ENCODE measurements at regions of chr2 and their contacts with region 1.

Region 1: DNA sequence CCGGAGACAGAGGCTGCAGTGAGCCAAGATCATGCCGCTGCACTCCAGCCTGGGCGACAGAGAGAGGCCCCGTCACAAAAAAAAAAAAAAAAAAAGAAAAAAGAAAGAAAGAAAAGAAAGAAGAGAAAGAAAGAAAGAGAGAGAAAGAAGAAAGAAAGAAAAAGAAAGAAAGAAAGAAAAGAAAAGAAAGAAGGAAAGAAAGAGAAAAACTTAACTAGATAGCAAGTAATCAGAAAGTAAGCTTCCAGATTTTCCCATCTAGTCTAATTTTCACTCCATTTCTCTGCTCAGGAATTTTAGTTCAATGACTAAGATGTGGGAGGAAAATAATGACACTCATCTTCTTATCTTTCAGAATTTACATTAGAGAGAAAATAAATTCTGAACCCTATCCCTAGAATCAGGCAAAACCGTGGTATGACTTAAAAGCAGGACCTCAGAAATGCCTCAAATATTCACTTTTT is 2.4 kb downstream of the GFPT1 start:
- DNase-seq: no peak
- H3K4me3 Mint-ChIP-seq: peak overlapping the region; percentile 94
- H3K27ac Mint-ChIP-seq: peak overlapping the region; percentile 88
- H3K4me1 Mint-ChIP-seq: peaks cover 48% of the 10 kb centered on the region
- H3K27me3 Mint-ChIP-seq: no peaks in the 10 kb centered on the region
- CTCF ChIP-seq: no peak

Region 2: DNA sequence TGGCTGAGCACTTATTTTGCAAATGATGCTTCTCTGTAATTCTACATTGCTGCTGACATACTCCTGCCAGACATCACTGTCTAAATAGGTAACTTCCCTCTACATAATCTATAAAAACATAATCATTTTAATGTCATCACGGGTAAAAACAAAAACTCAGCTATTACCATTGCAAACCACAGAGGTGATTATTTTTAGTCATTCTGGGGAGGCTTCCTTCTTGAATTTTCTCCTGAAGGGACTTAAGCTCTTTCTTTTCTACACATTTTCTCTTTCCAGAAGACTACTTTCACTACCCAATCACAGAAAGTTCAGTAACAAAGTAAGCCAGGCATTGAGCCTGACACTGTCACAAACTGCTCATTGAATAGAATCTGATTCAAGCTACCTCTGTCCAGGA is 93.0 kb after region 1 on chr2:
- CTCF ChIA-PET with region 1: interaction called, 10 read pairs
- intact Hi-C with region 1: loop called (anchors 2 kb)
- DNase-seq: no peak
- H3K4me3 Mint-ChIP-seq: no peak overlapping the region
- H3K27ac Mint-ChIP-seq: no peak overlapping the region
- H3K4me1 Mint-ChIP-seq: peaks cover 6% of the 10 kb centered on the region
- H3K27me3 Mint-ChIP-seq: no peaks in the 10 kb centered on the region
- CTCF ChIP-seq: no peak

Region 3: DNA sequence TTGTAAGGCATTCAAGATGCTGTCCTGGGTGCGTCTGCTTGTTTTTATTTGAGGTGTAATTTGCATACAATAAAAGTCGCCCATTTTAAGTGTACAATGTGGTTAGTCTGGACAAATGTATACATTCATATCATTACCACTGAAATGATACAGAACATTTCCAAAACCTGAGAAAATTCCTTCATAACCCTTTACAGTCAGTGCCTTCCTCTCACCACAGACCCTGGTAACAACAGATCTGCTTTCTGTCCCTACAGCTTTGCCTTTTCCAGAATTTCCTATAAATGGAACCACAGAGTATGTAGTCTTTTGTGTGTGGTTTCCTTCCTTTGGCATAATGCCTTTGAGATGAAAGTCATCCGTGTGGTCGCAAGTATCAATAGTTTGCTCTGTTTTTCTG is 98.4 kb after region 1 on chr2:
- CTCF ChIA-PET with region 1: interaction called, 3 read pairs
- intact Hi-C with region 1: loop called (anchors 2 kb)
- DNase-seq: no peak
- H3K4me3 Mint-ChIP-seq: peak overlapping the region; percentile 45
- H3K27ac Mint-ChIP-seq: peak overlapping the region; percentile 66
- H3K4me1 Mint-ChIP-seq: peaks cover 31% of the 10 kb centered on the region
- H3K27me3 Mint-ChIP-seq: no peaks in the 10 kb centered on the region
- CTCF ChIP-seq: no peak